AG04449 (cell line): ENCODE measurements at regions of chr10 and their contacts with region 1.

Region 1: DNA sequence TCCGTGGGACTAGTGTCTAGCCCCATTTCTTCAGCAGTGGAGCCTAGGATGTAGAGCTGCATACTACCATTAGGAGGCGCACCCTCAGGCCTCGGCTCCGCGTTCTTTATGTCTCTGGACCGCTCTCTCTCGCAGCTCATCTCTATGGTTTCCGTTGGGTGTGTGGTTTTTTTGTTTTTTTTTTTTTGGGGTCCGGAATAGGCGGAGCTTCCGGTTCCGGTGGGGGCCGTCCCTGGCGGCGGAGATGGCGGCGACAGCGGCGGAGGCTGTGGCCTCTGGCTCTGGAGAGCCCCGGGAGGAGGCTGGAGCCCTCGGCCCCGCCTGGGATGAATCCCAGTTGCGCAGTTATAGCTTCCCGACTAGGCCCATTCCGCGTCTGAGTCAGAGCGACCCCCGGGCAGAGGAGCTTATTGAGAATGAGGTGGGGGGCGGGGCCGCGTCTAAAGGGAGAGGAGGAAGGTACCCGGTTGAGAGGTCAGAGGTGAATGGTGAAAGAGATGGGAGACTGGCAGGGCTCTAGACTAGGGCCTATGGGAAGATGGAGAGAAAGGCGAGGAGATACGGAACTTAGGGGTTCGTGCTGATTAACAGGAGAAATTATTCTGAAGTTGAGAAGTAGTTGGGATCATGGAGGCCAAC is at the start of gene HIF1AN:
- DNase-seq: peak; percentile 63
- H3K4me3 ChIP-seq: peak within 1 kb of the TSS; percentile 67
- CTCF ChIP-seq: peak; percentile 95

Region 2: GRCh38 chr10:100481462-100482081 is 54.3 kb before region 1 on chr10:
- CTCF ChIA-PET with region 1: interaction called, 10 read pairs
- POLR2A ChIA-PET with region 1: no interaction called
- DNase-seq: no peak
- H3K4me3 ChIP-seq: peak overlapping the region; percentile 53
- CTCF ChIP-seq: no peak

Region 3: GRCh38 chr10:100524638-100525037 is 11.2 kb before region 1 on chr10:
- CTCF ChIA-PET with region 1: interaction called, 59 read pairs
- POLR2A ChIA-PET with region 1: interaction called, 5 read pairs
- DNase-seq: no peak
- H3K4me3 ChIP-seq: no peak overlapping the region
- CTCF ChIP-seq: no peak

Region 4: GRCh38 chr10:100551196-100551595 is 15.4 kb after region 1 on chr10:
- CTCF ChIA-PET with region 1: interaction called, 35 read pairs
- POLR2A ChIA-PET with region 1: interaction called, 3 read pairs
- DNase-seq: no peak
- H3K4me3 ChIP-seq: no peak overlapping the region
- CTCF ChIP-seq: no peak